ENCODE measurements at regions of chr15 and their contacts with region 1.

Region 1: GRCh38 chr15:68666120-68666811 is 87.5 kb downstream of the CORO2B start:
- DNase-seq: no peak
- H3K4me3 Mint-ChIP-seq: no peak overlapping the region
- H3K27ac Mint-ChIP-seq: no peak overlapping the region
- H3K4me1 Mint-ChIP-seq: no peaks in the 10 kb centered on the region
- H3K27me3 Mint-ChIP-seq: no peaks in the 10 kb centered on the region
- CTCF ChIP-seq: no peak

Region 2: DNA sequence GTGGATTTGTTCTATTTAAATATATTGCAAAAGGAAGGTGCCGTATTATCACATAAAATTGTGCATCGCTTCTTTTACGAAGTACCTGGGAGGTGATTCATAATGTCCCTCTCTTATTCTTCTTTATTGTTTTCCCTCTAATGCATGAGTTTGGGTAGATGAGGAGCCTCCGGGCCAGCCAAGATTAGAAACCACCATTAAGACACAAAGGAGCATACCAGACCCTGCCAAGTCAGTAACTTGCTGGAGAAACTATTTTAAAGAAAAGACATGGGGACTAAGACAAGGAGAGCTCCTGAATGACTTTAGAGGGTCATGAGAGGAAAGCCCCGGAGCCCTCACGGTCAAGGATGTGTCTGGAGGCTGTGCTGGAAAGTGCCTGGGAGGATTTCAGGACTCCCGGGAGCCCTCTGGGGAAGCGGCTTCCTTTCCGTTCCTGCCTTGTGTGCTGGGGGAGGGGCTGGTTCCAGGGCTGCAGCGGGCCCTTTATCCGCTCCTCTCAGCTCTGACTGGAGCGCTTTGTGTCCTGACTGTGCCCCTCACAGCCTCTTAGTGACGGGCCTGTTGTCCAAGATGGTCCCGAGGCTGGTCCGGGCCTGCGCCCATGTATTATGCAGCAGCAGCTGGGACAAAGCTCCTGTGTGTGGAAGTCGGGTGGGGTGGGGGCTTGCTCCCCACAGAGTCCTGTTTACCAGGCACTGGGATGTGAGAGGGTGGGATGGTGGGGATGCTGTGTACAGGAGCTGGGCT is 51.8 kb before region 1 on chr15:
- CTCF ChIA-PET with region 1: no interaction called
- POLR2A ChIA-PET with region 1: no interaction called
- intact Hi-C with region 1: no loop called
- DNase-seq: no peak
- H3K4me3 Mint-ChIP-seq: no peak overlapping the region
- H3K27ac Mint-ChIP-seq: no peak overlapping the region
- H3K4me1 Mint-ChIP-seq: no peaks in the 10 kb centered on the region
- H3K27me3 Mint-ChIP-seq: peaks cover 13% of the 10 kb centered on the region
- CTCF ChIP-seq: no peak

Region 3: DNA sequence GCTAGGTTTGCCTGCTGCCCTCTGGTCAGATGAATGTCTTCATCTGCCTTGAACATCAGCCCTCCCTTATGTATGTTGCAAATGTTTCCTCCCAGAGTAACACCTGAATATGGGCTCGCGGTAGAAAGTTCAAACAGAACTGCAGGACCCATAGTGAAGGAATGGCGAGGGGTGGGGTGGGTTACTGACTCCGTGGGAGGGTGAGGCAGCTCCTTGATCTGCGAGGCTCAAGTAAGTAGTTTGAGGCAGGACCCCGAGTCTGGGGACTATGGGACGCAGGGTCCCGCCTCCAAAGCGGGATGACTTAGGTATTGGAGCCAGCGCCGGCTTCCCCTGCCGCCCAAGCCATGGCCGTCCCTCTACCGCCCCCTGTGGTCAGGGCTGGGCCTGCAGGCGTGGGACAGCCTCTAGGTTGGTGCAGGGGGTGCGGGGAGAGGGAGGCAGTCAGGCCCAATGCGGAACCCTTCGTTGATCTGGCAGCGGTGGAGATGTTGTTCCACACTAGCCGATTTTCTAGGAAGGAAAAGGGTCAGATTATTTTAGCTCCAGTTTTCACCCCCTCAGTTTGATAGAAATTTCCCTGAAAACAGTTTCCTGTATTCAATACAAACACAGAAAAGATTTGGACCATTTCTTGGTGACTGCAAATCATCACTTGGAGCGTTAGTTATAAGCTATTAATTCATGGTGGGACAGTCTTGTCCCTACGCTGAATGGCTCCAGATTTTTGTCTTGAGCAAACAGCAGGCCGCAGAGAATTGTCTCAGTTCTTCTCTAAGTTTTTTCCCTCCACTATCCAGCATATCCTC is 15.2 kb before region 1 on chr15:
- CTCF ChIA-PET with region 1: interaction called, 13 read pairs
- POLR2A ChIA-PET with region 1: no interaction called
- intact Hi-C with region 1: no loop called
- DNase-seq: peak; percentile 46
- H3K4me3 Mint-ChIP-seq: no peak overlapping the region
- H3K27ac Mint-ChIP-seq: no peak overlapping the region
- H3K4me1 Mint-ChIP-seq: no peaks in the 10 kb centered on the region
- H3K27me3 Mint-ChIP-seq: no peaks in the 10 kb centered on the region
- CTCF ChIP-seq: peak; percentile 75